PC-3 (cell line): ENCODE measurements at regions of chr11 and their contacts with region 1.

Region 1: GRCh38 chr11:104151404-104152204 is 12.3 kb downstream of the PDGFD start:
- DNase-seq: peak; percentile 48
- ATAC-seq: no peak
- H3K4me3 ChIP-seq: no peak overlapping the region
- H3K27ac ChIP-seq: no peak overlapping the region
- H3K4me1 ChIP-seq: peaks cover 4% of the 10 kb centered on the region; the same call in 1 of the 2 replicates
- H3K27me3 ChIP-seq: peaks cover 6% of the 10 kb centered on the region; the same call in 1 of the 2 replicates
- CTCF ChIP-seq: peak; percentile 73

Region 2: GRCh38 chr11:103682318-103683184 is 469.1 kb before region 1 on chr11:
- CTCF ChIA-PET with region 1: no interaction called
- POLR2A ChIA-PET with region 1: no interaction called
- intact Hi-C with region 1: loop called (anchors 1 kb)
- DNase-seq: peak; percentile 74
- ATAC-seq: peak; percentile 84
- H3K4me3 ChIP-seq: no peak overlapping the region
- H3K27ac ChIP-seq: no peak overlapping the region
- H3K4me1 ChIP-seq: no peaks in the 10 kb centered on the region
- H3K27me3 ChIP-seq: no peaks in the 10 kb centered on the region
- CTCF ChIP-seq: peak; percentile 91

Region 3: DNA sequence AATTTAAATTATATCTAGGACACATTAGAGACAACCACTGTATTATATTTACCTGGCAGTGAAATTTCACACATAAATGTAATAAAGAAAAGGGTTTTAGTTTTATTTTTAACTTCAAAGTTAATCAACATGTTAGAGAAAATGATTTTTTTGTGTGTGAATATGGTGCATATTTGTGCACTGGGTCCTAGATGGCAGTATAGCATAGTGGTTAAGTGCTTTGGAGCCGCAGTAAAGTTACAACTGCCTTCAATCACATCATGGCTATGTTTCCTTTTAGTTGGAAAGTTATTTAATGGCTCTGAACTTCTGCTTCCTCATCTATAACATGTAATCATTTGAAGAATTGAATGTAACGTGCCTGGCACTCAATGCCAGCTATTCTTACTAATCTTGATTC is 224.1 kb before region 1 on chr11:
- CTCF ChIA-PET with region 1: no interaction called
- POLR2A ChIA-PET with region 1: no interaction called
- intact Hi-C with region 1: loop called (anchors 1 kb)
- DNase-seq: peak; percentile 49
- ATAC-seq: peak; percentile 64
- H3K4me3 ChIP-seq: no peak overlapping the region
- H3K27ac ChIP-seq: no peak overlapping the region
- H3K4me1 ChIP-seq: peaks cover 18% of the 10 kb centered on the region
- H3K27me3 ChIP-seq: no peaks in the 10 kb centered on the region
- CTCF ChIP-seq: peak; percentile 83

Region 4: DNA sequence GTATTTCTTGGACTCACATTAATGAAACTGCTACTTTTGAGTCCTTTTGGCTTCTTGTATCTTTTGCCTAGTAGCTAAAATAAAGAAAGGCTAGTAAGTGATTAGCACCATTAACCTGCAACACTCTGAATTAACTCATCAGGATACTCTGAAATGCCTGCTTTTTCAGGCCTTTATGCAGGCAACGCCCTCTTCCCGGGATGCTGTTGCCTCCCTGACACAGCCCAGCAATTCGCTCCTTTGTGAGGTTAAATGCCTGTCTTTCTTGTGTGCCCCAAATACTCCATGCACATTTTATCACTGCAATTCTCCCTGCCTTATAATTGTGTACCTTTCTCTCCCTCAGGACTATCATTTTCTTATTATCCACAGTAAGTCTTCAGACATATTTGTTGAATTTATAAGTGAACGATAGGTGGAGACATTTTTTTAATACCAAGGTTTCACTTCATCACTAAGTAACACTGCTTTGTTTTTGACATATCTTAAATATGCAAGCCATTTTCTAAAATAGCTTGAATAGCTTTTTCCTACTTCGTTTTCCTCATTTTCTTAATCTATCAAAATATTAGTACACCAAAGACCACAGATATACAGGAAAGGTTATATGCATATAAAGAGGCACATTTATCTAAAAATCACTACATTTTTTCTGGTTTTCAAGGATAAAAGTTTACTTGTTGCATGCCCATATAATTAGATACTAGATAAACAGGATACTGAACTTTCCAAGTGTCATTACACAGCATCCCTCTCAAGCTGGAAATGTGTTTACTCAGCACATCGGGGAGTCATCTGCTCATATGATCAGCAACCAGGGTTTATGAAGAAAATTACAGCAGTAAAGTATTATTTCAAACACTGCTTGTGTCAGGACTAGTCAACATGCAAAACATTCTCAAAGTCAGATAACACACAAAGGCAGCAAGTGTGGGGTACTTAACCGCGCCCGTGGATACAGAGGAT is 163.7 kb before region 1 on chr11:
- CTCF ChIA-PET with region 1: no interaction called
- POLR2A ChIA-PET with region 1: no interaction called
- intact Hi-C with region 1: loop called (anchors 5 kb)
- DNase-seq: peak; percentile 22
- ATAC-seq: peak; percentile 55
- H3K4me3 ChIP-seq: 0 out of 2 replicates have a peak overlapping the region, but pooled peaks have one; percentile 0
- H3K27ac ChIP-seq: no peak overlapping the region
- H3K4me1 ChIP-seq: peaks cover 12% of the 10 kb centered on the region; the same call in 1 of the 2 replicates
- H3K27me3 ChIP-seq: peaks cover 7% of the 10 kb centered on the region; the same call in 1 of the 2 replicates
- CTCF ChIP-seq: peak; percentile 57